ENCODE measurements at regions of chr18 and their contacts with region 1.

Region 1: DNA sequence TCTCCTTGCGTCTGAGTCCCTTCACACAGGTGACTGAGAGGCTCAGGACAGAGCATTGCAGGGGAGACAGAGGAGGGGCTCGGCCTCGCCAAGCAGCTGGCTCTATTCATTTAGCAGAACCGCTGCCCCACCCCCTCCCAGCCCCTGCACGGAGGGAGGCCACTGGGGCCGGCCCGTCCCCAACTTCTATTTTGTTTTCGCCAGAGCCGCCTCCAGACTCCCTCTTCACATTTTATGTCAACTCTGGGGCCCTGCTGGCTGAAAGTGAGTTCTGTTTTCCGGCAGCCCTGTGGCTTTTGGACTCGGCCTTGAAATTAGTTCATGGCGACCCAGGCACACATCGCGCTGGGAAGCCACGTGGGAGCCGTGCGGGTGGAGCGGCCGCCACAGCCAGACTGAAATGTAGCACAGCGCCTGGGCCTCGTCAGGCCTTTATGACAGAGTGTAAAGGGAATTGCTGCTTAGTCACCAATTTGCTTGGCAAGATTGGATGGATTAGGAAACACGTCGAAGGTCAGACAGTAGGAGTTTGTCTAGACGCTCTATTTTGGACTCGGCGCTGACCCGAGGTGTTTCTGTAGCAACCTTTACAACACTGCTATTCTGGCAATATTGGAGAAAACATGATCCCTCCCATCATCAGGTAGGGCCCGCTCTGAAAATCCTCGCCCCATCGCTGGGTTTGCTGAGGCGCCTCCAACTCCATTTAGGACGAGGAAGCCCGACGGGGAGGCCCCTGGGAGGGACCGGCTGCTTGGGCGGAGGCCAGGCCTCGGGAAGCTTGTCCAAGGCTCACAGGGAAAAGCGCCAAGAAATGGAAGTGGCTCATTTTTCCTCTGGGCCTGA is 90.7 kb upstream of the CTDP1 start:
- DNase-seq: peak in 6 of 10 donors; percentile 21 to 77 (median 52)
- H3K4me3 ChIP-seq: no peak overlapping the region
- H3K27ac ChIP-seq: peak overlapping the region in 3 of 59 donors; percentile 21 to 61 (median 53)
- H3K27me3 ChIP-seq: peaks cover 0 to 16% (median 0%) of the 10 kb centered on the region in 45 donors
- CTCF ChIP-seq: no peak

Region 2: DNA sequence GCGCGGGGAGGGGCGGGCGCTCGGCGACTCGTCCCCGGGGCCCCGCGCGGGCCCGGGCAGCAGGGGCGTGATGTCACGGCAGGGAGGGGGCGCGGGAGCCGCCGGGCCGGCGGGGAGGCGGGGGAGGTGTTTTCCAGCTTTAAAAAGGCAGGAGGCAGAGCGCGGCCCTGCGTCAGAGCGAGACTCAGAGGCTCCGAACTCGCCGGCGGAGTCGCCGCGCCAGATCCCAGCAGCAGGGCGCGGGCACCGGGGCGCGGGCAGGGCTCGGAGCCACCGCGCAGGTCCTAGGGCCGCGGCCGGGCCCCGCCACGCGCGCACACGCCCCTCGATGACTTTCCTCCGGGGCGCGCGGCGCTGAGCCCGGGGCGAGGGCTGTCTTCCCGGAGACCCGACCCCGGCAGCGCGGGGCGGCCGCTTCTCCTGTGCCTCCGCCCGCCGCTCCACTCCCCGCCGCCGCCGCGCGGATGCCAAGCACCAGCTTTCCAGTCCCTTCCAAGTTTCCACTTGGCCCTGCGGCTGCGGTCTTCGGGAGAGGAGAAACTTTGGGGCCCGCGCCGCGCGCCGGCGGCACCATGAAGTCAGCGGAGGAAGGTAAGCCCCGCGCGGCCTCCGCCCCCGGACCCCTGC is 193.0 kb before region 1 on chr18 and contains the start of gene NFATC1:
- intact Hi-C with region 1: loop called in 1 of 2 experiments (anchors 5 kb)
- DNase-seq: peak in 4 of 10 donors; percentile 48 to 75 (median 61)
- H3K4me3 ChIP-seq: peak within 1 kb of the TSS; percentile 26 to 71 (median 55)
- H3K27ac ChIP-seq: peak within 1 kb of the TSS in 23 of 59 donors; percentile 7 to 81 (median 55)
- H3K27me3 ChIP-seq: peaks cover 0 to 83% (median 31%) of the 10 kb centered on the region in 45 donors
- CTCF ChIP-seq: no peak
- total RNA-seq, gene NFATC1: 1.9 to 17.4 (median 6.1) TPM

Region 3: DNA sequence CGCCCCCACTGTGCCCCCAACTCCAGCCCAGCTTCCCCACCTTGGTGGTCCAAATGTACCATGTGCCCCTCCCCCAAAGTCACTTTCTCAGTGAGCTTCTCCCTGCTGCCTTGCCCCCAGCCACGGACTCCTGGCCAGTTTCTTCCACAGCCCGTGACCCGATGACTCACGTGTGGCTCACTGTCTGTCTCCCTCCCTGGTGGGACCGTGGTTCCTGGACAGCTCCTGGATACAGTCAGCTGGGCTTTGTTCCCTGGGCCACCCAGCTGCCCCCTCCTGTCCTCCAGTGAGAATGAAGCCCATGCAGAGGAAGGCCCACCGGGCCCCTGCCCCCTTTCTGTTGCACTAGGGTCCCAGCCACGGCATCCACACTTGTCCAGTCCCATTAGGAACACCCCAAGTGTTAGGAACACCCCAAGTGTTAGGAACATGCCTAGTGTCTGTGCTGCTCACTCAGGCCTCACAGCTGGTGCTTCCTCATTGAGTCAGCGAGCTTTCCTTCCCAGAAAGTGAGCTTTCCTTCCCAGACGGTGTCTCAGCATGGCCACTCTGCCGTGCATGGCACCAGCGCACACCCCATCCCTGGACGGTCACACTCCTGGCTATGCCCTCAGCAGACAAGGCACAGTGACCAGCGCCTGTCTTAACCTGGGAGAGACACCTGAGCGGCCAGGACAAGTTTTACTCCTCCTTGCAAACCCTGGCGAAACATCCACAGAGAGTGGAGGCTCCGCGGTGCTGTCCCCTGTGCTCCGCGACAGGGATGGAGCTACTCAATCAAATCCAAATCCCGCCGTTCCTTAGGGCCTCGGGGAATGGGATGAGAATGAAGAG is 46.0 kb after region 1 on chr18:
- intact Hi-C with region 1: loop called in 1 of 2 experiments (anchors 5 kb)
- DNase-seq: peak in 2 of 10 donors; percentile 3 to 28
- H3K4me3 ChIP-seq: no peak overlapping the region
- H3K27ac ChIP-seq: no peak overlapping the region
- H3K27me3 ChIP-seq: peaks cover 0 to 29% (median 22%) of the 10 kb centered on the region in 45 donors
- CTCF ChIP-seq: no peak

Region 4: GRCh38 chr18:80056095-80056494 is 467.2 kb after region 1 on chr18:
- intact Hi-C with region 1: no loop called
- DNase-seq: no peak
- H3K4me3 ChIP-seq: no peak overlapping the region
- H3K27ac ChIP-seq: no peak overlapping the region
- H3K27me3 ChIP-seq: no peaks in the 10 kb centered on the region
- CTCF ChIP-seq: no peak

Measured in dorsolateral prefrontal cortex (tissue), 120 donors.